Activated CD4-positive, alpha-beta T cell treated with anti-CD3 and anti-CD28 coated beads, Interleukin-2, amount 10 ng/mL, durations not matched to agents 24 days and 14 days (primary cell): ENCODE measurements at regions of chr3 and their contacts with region 1.

Region 1: GRCh38 chr3:36993326-36994283 is at the start of gene MLH1:
- DNase-seq: peak; percentile 100
- H3K4me3 Mint-ChIP-seq: no peak within 1 kb of the TSS
- H3K27ac Mint-ChIP-seq: no peak within 1 kb of the TSS
- H3K4me1 Mint-ChIP-seq: peaks cover 38% of the 10 kb centered on the region
- H3K27me3 Mint-ChIP-seq: no peaks in the 10 kb centered on the region
- total RNA-seq, gene MLH1: 69.5 and 71.0 TPM in 2 replicates

Region 2: GRCh38 chr3:36911990-36912804 is 81.4 kb before region 1 on chr3:
- intact Hi-C with region 1: loop called (anchors 1 kb)
- DNase-seq: peak; percentile 85
- H3K4me3 Mint-ChIP-seq: peak overlapping the region; percentile 66
- H3K27ac Mint-ChIP-seq: peak overlapping the region; percentile 71
- H3K4me1 Mint-ChIP-seq: peaks cover 38% of the 10 kb centered on the region
- H3K27me3 Mint-ChIP-seq: no peaks in the 10 kb centered on the region

Region 3: GRCh38 chr3:36944012-36944640 is 49.5 kb before region 1 on chr3:
- intact Hi-C with region 1: loop called (anchors 1 kb)
- DNase-seq: peak; percentile 75
- H3K4me3 Mint-ChIP-seq: peak overlapping the region; percentile 76
- H3K27ac Mint-ChIP-seq: no peak overlapping the region
- H3K4me1 Mint-ChIP-seq: peaks cover 12% of the 10 kb centered on the region
- H3K27me3 Mint-ChIP-seq: peaks cover 14% of the 10 kb centered on the region

Region 4: GRCh38 chr3:37210230-37210629 is 216.6 kb after region 1 on chr3:
- intact Hi-C with region 1: loop called (anchors 1 kb)
- DNase-seq: no peak
- H3K4me3 Mint-ChIP-seq: no peak overlapping the region
- H3K27ac Mint-ChIP-seq: no peak overlapping the region
- H3K4me1 Mint-ChIP-seq: no peaks in the 10 kb centered on the region
- H3K27me3 Mint-ChIP-seq: peaks cover 2% of the 10 kb centered on the region